Calu3 (cell line): ENCODE measurements at regions of chr17 and their contacts with region 1.

Region 1: DNA sequence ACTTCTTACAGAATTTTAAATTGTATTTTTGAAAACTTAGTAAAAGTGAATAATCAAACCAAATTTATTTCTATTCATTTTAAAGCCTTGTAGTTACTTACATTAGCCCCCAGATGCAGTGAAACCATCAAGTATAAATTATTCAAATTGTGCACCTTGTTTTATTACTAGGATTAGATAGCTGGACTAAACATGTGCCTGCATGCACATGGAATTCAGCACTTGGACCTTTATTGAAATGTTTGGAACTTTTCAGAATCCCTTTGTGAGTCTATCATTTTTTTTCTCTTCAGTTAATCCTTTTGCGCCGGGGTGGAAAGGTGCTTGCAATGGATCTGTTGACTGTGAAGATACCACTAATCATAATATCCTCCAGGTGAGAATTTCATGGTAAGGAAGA is 4.7 kb downstream of the ZPBP2 start:
- DNase-seq: peak; percentile 78
- H3K4me3 Mint-ChIP-seq: no peak overlapping the region
- H3K27ac Mint-ChIP-seq: no peak overlapping the region
- H3K4me1 Mint-ChIP-seq: no peaks in the 10 kb centered on the region
- H3K27me3 Mint-ChIP-seq: peaks cover 11% of the 10 kb centered on the region
- CTCF ChIP-seq: no peak

Region 2: GRCh38 chr17:39687811-39688518 is 184.8 kb before region 1 on chr17 and contains the start of gene PGAP3:
- CTCF ChIA-PET with region 1: interaction called, 19 read pairs
- intact Hi-C with region 1: no loop called
- DNase-seq: peak; percentile 100
- H3K4me3 Mint-ChIP-seq: peak within 1 kb of the TSS; percentile 64
- H3K27ac Mint-ChIP-seq: peak within 1 kb of the TSS; percentile 63
- H3K4me1 Mint-ChIP-seq: peaks cover 27% of the 10 kb centered on the region
- H3K27me3 Mint-ChIP-seq: no peaks in the 10 kb centered on the region
- CTCF ChIP-seq: no peak
- total RNA-seq, gene PGAP3: 1,186 and 1,276 TPM in 2 replicates

Region 3: GRCh38 chr17:39744836-39745672 is 127.7 kb before region 1 on chr17:
- CTCF ChIA-PET with region 1: interaction called, 75 read pairs
- intact Hi-C with region 1: no loop called
- DNase-seq: no peak
- H3K4me3 Mint-ChIP-seq: no peak overlapping the region
- H3K27ac Mint-ChIP-seq: no peak overlapping the region
- H3K4me1 Mint-ChIP-seq: peaks cover 32% of the 10 kb centered on the region
- H3K27me3 Mint-ChIP-seq: no peaks in the 10 kb centered on the region
- CTCF ChIP-seq: no peak

Region 4: DNA sequence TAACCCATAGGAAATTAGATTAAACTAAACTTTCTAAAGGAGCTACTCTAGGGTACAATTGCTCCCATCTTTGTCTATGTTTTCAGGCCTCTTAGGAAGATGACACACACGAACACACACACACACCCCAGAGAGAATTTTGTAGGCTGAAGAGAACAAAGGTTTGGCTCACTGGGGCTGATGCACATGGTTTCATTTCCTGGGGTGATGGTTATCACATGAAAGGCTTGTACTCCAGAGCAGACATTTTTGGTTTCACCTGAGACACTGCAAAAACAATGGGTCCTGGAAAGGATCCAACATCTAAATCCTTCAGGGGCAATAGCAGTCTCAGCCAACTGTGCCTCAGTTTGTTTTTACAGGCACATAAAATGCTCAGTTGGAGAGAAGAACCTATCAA is 72.2 kb before region 1 on chr17:
- CTCF ChIA-PET with region 1: interaction called, 79 read pairs
- intact Hi-C with region 1: no loop called
- DNase-seq: peak; percentile 85
- H3K4me3 Mint-ChIP-seq: no peak overlapping the region
- H3K27ac Mint-ChIP-seq: no peak overlapping the region
- H3K4me1 Mint-ChIP-seq: peaks cover 17% of the 10 kb centered on the region
- H3K27me3 Mint-ChIP-seq: no peaks in the 10 kb centered on the region
- CTCF ChIP-seq: no peak

Region 5: DNA sequence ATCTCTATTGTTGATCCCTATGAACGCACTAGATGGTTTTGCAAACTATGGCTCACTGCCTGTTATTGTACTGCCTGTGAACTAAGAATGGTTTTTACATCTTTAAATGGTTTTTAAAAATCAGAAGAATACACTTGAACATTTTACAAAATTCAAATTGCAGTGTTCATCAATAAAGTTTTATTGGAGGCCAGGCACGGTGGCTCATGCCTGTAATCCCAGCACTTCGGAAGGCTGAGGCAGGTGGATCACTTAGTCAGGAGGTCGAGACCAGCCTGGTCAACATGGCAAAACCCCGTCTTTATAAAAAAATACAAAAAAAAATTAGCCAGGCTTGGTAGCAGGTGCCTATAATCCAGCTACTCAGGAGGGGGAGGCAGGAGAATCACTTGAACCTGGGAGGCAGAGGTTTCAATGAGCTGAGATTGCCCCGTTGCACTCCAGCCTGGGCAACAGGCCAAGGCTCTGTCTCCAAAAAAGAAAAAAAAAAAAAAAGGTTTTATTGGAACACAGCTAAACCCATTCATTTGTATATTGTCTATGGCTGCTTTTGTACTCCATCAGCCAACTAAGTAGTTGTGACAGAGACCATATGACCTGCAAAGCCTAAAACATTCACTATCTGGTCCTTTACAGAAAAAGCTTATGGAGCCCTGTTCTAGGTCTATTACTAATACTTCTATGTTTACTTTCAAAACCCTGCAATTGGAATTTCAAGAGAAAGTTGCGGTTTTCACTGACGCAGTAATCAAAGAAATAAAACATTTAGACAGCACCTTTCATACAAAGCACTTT is 27.5 kb before region 1 on chr17:
- CTCF ChIA-PET with region 1: interaction called, 84 read pairs
- intact Hi-C with region 1: no loop called
- DNase-seq: peak; percentile 81
- H3K4me3 Mint-ChIP-seq: no peak overlapping the region
- H3K27ac Mint-ChIP-seq: no peak overlapping the region
- H3K4me1 Mint-ChIP-seq: peaks cover 10% of the 10 kb centered on the region
- H3K27me3 Mint-ChIP-seq: no peaks in the 10 kb centered on the region
- CTCF ChIP-seq: no peak

Region 6: DNA sequence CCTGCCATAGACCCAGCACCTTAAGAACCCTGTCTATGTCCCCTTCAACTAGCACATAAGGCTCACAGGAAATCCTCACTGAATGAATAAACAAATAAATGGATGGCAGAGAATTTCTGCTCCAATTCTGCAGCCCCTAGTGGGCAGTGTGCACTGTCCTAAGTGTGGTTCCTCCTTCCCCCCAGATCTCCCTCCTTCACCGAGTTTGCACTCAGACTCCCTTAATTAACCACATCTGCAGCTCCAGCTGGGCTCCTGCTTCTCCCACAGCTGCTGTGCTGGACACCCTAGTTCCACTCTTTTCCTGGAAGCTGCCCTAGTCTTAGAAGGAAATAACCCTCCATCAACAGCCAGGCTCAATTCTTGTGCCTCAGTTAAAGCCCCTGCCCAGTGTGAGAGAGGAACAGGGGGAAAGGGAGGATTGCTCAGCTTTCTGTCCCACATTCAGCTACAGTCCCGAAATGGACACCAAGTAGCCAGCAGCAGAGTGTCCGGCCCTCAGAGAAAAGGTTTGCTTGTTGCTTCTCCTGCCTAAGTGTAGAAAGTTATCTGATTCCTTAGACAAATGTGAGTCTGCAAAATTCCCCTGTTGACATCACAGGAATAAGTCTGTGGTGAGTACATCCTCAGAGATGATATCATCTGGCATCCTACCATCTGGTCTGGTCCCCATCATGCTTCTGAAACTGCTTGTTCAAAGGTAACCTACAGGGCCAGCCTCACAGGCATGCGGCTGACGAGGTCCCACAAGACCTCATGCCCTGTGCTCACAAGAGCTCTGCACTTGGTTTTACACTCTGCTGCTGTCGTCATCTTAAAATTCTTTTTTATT is 67.1 kb after region 1 on chr17:
- CTCF ChIA-PET with region 1: interaction called, 22 read pairs
- intact Hi-C with region 1: no loop called
- DNase-seq: peak; percentile 76
- H3K4me3 Mint-ChIP-seq: no peak overlapping the region
- H3K27ac Mint-ChIP-seq: no peak overlapping the region
- H3K4me1 Mint-ChIP-seq: peaks cover 12% of the 10 kb centered on the region
- H3K27me3 Mint-ChIP-seq: peaks cover 63% of the 10 kb centered on the region
- CTCF ChIP-seq: no peak

Region 7: GRCh38 chr17:40000161-40000560 is 127.4 kb after region 1 on chr17:
- CTCF ChIA-PET with region 1: no interaction called
- intact Hi-C with region 1: no loop called
- DNase-seq: no peak
- H3K4me3 Mint-ChIP-seq: no peak overlapping the region
- H3K27ac Mint-ChIP-seq: no peak overlapping the region
- H3K4me1 Mint-ChIP-seq: no peaks in the 10 kb centered on the region
- H3K27me3 Mint-ChIP-seq: peaks cover 13% of the 10 kb centered on the region
- CTCF ChIP-seq: no peak